A549 (cell line): ENCODE measurements at regions of chr4 and their contacts with region 1.

Region 1: DNA sequence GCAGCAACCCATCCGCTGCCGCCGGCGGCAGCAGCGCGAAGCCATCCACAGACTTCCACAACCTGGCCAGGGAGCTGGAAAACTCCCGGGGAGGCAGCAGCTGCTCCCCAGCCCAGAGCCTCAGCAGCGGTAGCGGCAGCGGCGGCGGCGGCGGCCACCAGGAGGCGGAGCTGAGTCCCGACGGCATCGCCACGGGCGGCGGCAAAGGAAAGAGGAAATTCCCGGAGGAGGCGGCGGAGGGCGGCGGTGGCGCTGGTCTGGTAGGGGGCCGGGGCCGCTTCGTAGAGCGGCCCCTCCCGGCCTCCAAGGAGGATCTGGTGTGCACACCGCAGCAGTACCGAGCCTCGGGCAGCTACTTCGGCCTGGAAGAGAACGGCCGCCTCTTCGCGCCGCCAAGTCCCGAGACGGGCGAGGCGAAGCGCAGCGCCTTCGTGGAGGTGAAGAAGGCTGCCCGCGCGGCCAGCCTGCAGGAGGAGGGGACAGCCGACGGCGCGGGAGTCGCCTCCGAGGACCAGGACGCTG is 4.9 kb downstream of the PRDM8 start:
- DNase-seq: peak; percentile 61 to 63
- ATAC-seq: peak; percentile 84 to 91
- H3K4me3 ChIP-seq: peak overlapping the region; percentile 48
- H3K27ac ChIP-seq: peak overlapping the region; percentile 50 to 86; a peak in 5 of 6 replicates
- H3K4me1 ChIP-seq: no peaks in the 10 kb centered on the region; the same call in 2 of the 3 replicates
- CTCF ChIP-seq: peak; percentile 47
- EP300 ChIP-seq: no peak
- POLR2A ChIP-seq: no peak
- RAD21 ChIP-seq: 0 out of 5 replicates have a peak, but pooled peaks of 1 of the 2 experiments have one; percentile 4

Region 2: GRCh38 chr4:80184053-80184790 is 18.0 kb before region 1 on chr4:
- CTCF ChIA-PET with region 1: interaction called, 14 read pairs
- POLR2A ChIA-PET with region 1: interaction called, 3 read pairs
- DNase-seq: peak; percentile 35 to 52
- ATAC-seq: peak; percentile 95 to 100
- H3K4me3 ChIP-seq: peak overlapping the region; percentile 54
- H3K27ac ChIP-seq: peak overlapping the region; percentile 45 to 86; a peak in 4 of 6 replicates
- H3K4me1 ChIP-seq: no peaks in the 10 kb centered on the region
- CTCF ChIP-seq: peak; percentile 87
- EP300 ChIP-seq: no peak
- POLR2A ChIP-seq: no peak
- RAD21 ChIP-seq: peak; percentile 45 to 74

Region 3: DNA sequence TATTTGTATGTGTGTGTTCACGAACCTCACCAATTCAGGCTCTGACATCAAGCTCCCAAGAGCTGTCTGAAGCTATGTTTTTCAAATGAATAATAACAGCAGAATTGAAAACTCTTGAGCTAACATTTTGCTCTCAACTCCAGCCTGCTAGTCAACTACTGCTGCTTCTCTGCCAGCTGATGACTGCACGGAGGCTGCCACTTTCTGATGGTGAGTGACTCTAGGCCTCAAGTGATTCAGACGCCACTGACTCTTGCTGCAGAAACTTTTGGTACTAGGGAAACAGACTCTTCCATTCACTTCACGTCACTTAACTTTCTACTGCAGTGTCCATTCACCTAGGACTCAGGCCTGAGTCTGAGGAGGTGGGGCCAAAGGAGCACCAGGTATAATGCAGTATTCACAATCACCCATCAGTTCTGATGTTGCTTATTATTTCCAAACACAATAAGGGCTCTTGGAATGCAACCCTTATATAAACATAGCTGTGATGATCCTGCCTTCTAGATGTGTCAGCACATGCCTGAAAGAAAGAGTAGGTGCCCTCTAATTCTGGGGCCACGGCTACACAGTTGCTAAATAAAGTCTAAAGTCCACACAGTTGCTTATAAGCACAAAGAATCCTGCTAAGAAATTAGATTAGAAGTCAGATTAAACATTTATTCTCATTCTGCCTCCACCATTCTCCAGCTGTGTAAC is 11.0 kb after region 1 on chr4:
- CTCF ChIA-PET with region 1: interaction called, 22 read pairs
- POLR2A ChIA-PET with region 1: no interaction called
- DNase-seq: no peak
- ATAC-seq: no peak
- H3K4me3 ChIP-seq: no peak overlapping the region
- H3K27ac ChIP-seq: no peak overlapping the region
- H3K4me1 ChIP-seq: no peaks in the 10 kb centered on the region
- CTCF ChIP-seq: no peak
- EP300 ChIP-seq: no peak
- POLR2A ChIP-seq: no peak
- RAD21 ChIP-seq: no peak

Region 4: DNA sequence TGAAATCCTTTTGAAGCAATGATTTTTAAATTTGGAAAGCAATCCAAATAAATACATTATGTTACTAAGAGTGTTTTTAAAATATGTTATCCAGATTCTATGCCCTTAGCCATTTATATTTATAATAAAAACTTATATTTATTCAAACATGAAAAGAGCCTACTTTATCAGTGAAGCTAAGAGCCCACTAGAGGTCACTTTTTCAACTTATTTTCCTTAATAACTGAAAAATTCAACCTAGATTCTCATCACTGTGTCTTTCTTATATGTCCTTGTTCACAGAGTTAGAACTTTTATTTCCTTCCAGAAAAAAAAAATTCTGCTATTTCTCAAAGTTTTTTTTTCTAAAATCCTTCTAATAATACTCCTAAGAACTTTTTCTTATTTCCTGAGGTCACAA is 18.9 kb after region 1 on chr4:
- CTCF ChIA-PET with region 1: interaction called, 12 read pairs
- POLR2A ChIA-PET with region 1: no interaction called
- DNase-seq: no peak
- ATAC-seq: no peak
- H3K4me3 ChIP-seq: no peak overlapping the region
- H3K27ac ChIP-seq: no peak overlapping the region
- H3K4me1 ChIP-seq: no peaks in the 10 kb centered on the region
- CTCF ChIP-seq: peak; percentile 46
- EP300 ChIP-seq: no peak
- POLR2A ChIP-seq: no peak
- RAD21 ChIP-seq: peak; percentile 20 to 51; a peak in 3 of 5 replicates

Region 5: GRCh38 chr4:80422727-80423404 is 220.6 kb after region 1 on chr4:
- CTCF ChIA-PET with region 1: no interaction called
- POLR2A ChIA-PET with region 1: no interaction called
- DNase-seq: no peak
- ATAC-seq: no peak
- H3K4me3 ChIP-seq: no peak overlapping the region
- H3K27ac ChIP-seq: no peak overlapping the region
- H3K4me1 ChIP-seq: no peaks in the 10 kb centered on the region
- CTCF ChIP-seq: no peak
- EP300 ChIP-seq: no peak
- POLR2A ChIP-seq: no peak
- RAD21 ChIP-seq: no peak